Activated naive CD4-positive, alpha-beta T cell treated with anti-CD3 and anti-CD28 coated beads for 36 hours (primary cell): ENCODE measurements at regions of chr1 and their contacts with region 1.

Region 1: GRCh38 chr1:32247983-32248889 is 1.2 kb downstream of the FAM167B start:
- DNase-seq: peak; percentile 87
- H3K4me3 Mint-ChIP-seq: peak overlapping the region; percentile 49
- H3K27ac Mint-ChIP-seq: peak overlapping the region; percentile 100
- H3K4me1 Mint-ChIP-seq: peaks cover 46% of the 10 kb centered on the region
- H3K27me3 Mint-ChIP-seq: no peaks in the 10 kb centered on the region

Region 2: GRCh38 chr1:32179443-32180185 is 68.6 kb before region 1 on chr1 and contains the start of gene TXLNA:
- CTCF ChIA-PET with region 1: interaction called, 5 read pairs
- intact Hi-C with region 1: loop called (anchors 2 kb)
- DNase-seq: peak; percentile 94
- H3K4me3 Mint-ChIP-seq: peak within 1 kb of the TSS; percentile 86
- H3K27ac Mint-ChIP-seq: peak within 1 kb of the TSS; percentile 96
- H3K4me1 Mint-ChIP-seq: peaks cover 47% of the 10 kb centered on the region
- H3K27me3 Mint-ChIP-seq: no peaks in the 10 kb centered on the region
- total RNA-seq, gene TXLNA: 84.3 to 86.2 TPM

Region 3: GRCh38 chr1:32215629-32216480 is 32.4 kb before region 1 on chr1:
- CTCF ChIA-PET with region 1: interaction called, 42 read pairs
- intact Hi-C with region 1: no loop called
- DNase-seq: peak; percentile 77
- H3K4me3 Mint-ChIP-seq: no peak overlapping the region
- H3K27ac Mint-ChIP-seq: no peak overlapping the region
- H3K4me1 Mint-ChIP-seq: peaks cover 14% of the 10 kb centered on the region
- H3K27me3 Mint-ChIP-seq: no peaks in the 10 kb centered on the region

Region 4: DNA sequence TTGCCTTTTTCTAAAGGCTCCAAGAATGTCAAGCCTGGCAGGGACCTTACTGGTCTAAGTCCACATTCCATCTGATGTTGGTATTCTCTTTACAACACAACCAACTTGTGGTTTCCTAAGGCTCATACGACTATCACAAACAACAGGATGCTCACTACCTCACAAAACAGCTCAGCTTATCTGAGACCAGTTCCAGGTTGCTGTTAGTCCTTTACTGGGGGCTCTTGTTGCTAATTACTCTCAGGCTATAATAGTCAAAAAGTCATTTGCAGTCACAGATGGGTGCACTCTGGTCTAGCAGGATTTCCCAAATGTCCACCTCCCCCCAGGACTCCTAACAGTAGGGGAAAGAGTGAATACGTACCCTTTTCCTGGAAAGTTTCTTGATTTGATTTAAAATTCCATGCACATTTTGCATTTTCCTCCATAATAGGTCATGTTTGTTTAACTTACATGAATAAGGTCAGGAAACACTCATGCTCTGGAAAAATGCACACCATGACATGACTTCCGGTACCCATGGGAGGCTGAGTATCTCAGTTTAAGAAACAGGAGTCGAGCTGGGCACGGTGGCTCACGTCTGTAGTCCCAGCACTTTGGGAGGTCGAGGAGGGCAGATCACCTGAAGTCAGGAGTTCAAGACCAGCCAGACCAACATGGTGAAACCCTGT is 18.8 kb after region 1 on chr1:
- CTCF ChIA-PET with region 1: interaction called, 6 read pairs
- intact Hi-C with region 1: loop called (anchors 1 kb)
- DNase-seq: peak; percentile 64
- H3K4me3 Mint-ChIP-seq: peak overlapping the region; percentile 50
- H3K27ac Mint-ChIP-seq: peak overlapping the region; percentile 99
- H3K4me1 Mint-ChIP-seq: peaks cover 62% of the 10 kb centered on the region
- H3K27me3 Mint-ChIP-seq: no peaks in the 10 kb centered on the region

Region 5: DNA sequence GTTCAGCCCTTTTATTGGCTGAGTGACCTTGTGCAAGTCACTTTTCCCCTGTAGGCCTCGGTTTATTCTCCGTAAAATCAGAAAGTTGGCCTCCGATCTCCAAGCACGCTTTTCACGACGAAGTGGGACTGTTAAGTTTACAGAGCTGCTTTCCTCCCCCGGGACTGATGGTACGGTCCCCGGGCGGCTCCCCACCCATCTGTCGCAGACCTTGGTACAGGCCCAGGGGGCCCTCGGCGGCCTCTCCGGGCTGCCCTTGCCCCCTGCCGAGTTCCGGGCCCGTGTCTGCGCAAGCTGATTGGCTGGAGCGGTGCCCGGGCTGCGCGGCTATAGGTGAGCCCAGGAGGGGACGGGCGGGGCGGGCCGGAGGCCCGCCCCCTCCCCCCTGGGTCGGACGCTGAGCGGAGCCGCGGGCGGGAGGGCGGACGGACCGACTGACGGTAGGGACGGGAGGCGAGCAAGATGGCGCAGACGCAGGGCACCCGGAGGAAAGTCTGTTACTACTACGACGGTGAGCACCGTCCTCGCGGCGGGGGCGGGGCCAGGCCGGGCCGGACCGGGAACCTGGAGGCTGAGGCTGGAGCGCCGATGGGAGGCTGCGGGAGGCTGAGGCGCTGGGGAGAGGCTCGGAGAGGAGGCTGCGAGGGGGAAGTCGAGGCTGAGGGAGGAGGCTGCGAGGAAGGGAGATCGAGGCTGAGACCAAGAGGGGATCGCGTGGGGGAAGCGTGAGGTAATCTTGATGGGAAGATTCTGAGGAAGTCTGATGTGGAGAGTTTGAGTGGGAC is 43.7 kb after region 1 on chr1 and contains the start of gene HDAC1:
- CTCF ChIA-PET with region 1: interaction called, 16 read pairs
- intact Hi-C with region 1: loop called (anchors 2 kb)
- DNase-seq: peak; percentile 97
- H3K4me3 Mint-ChIP-seq: peak within 1 kb of the TSS; percentile 100
- H3K27ac Mint-ChIP-seq: peak within 1 kb of the TSS; percentile 98
- H3K4me1 Mint-ChIP-seq: peaks cover 48% of the 10 kb centered on the region
- H3K27me3 Mint-ChIP-seq: no peaks in the 10 kb centered on the region
- total RNA-seq, gene HDAC1: 111 to 120 TPM

Region 6: GRCh38 chr1:32394141-32394889 is 146.1 kb after region 1 on chr1 and contains the start of gene BSDC1:
- CTCF ChIA-PET with region 1: no interaction called
- intact Hi-C with region 1: no loop called
- DNase-seq: peak; percentile 100
- H3K4me3 Mint-ChIP-seq: peak within 1 kb of the TSS; percentile 100
- H3K27ac Mint-ChIP-seq: peak within 1 kb of the TSS; percentile 99
- H3K4me1 Mint-ChIP-seq: peaks cover 31% of the 10 kb centered on the region
- H3K27me3 Mint-ChIP-seq: no peaks in the 10 kb centered on the region
- total RNA-seq, gene BSDC1: 35.2 to 38.3 TPM

Region 7: DNA sequence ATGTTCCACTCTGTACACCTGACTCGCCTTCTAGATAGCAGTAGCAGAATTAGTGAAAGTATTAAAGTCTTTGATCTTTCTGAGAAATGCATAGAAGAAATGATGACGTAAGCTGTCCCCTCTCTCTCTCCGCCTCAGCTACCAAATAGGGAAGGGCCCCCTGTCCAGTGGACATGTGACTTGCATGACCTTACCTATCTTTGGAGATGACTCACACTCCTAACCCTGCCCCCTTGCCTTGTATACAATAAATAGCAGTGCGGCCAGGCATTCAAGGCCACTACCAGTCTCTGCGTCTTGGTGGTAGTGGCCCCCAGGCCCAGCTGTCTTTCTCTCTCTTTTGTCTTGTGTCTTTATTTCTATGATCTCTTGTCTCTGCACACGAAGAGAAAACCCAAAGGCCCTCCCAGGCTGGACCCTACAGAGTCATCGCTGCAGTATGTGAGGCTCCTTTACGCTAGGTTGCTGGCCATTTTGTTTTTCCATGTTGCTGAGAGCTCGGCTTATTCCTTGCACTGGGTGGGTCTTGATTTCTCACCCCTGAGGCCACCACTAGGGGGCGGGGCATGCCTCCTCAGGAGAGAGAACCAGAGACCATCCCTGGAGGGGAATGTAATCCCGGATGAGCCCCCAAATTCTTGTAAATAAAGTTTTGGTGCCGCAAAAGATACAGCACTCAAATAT is 200.7 kb after region 1 on chr1:
- CTCF ChIA-PET with region 1: no interaction called
- intact Hi-C with region 1: no loop called
- DNase-seq: no peak
- H3K4me3 Mint-ChIP-seq: no peak overlapping the region
- H3K27ac Mint-ChIP-seq: no peak overlapping the region
- H3K4me1 Mint-ChIP-seq: no peaks in the 10 kb centered on the region
- H3K27me3 Mint-ChIP-seq: peaks cover 19% of the 10 kb centered on the region

Region 8: DNA sequence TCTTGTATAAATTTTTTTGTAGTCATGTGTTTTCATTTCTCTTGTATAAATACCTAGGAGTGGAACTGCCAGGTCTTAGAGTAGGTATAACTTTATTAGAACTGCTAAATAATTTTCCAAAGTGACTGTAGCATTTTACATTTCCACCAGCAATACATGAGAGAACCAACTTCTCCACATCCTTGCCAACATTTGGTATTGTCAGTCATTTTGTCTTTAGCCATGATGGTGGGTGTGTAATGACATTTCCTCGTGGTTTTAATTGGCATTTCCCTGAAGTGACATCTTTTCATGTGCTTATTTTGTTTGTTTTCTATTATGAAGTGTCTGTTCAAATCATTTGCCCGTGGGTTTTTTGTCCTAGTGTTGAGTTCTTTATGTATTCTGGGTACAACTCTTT is 320.7 kb after region 1 on chr1:
- CTCF ChIA-PET with region 1: no interaction called
- intact Hi-C with region 1: no loop called
- DNase-seq: no peak
- H3K4me3 Mint-ChIP-seq: no peak overlapping the region
- H3K27ac Mint-ChIP-seq: no peak overlapping the region
- H3K4me1 Mint-ChIP-seq: no peaks in the 10 kb centered on the region
- H3K27me3 Mint-ChIP-seq: peaks cover 2% of the 10 kb centered on the region

Region 9: GRCh38 chr1:32817159-32817814 is 569.1 kb after region 1 on chr1 and contains the starts of genes S100PBP and YARS1:
- CTCF ChIA-PET with region 1: no interaction called
- intact Hi-C with region 1: loop called (anchors 1 kb)
- DNase-seq: peak; percentile 100
- H3K4me3 Mint-ChIP-seq: peak within 1 kb of the TSS; percentile 92
- H3K27ac Mint-ChIP-seq: peak within 1 kb of the TSS; percentile 94
- H3K4me1 Mint-ChIP-seq: peaks cover 51% of the 10 kb centered on the region
- H3K27me3 Mint-ChIP-seq: no peaks in the 10 kb centered on the region
- total RNA-seq, gene S100PBP: 26.1 to 31.2 TPM
- total RNA-seq, gene YARS1: 293 to 312 TPM